ENCODE measurements at regions of chr5 and their contacts with region 1.

Region 1: GRCh38 chr5:36728697-36729543 is 122.5 kb downstream of the SLC1A3 start:
- DNase-seq: peak in 4 of 35 experiments; percentile 9 to 75 (median 21)
- ATAC-seq: peak; percentile 44 to 61 (median 60)
- H3K4me3 ChIP-seq: no peak overlapping the region
- H3K4me3 Mint-ChIP-seq: no peak overlapping the region
- H3K27ac ChIP-seq: no peak overlapping the region
- H3K27ac Mint-ChIP-seq: no peak overlapping the region
- H3K4me1 ChIP-seq: peaks cover 3 to 9% of the 10 kb centered on the region in 2 experiments
- H3K4me1 Mint-ChIP-seq: peaks cover 16 to 19% (median 17%) of the 10 kb centered on the region in 3 donors
- H3K27me3 ChIP-seq: no peaks in the 10 kb centered on the region
- H3K27me3 Mint-ChIP-seq: peaks cover 3 to 7% of the 10 kb centered on the region in 2 donors

Region 2: DNA sequence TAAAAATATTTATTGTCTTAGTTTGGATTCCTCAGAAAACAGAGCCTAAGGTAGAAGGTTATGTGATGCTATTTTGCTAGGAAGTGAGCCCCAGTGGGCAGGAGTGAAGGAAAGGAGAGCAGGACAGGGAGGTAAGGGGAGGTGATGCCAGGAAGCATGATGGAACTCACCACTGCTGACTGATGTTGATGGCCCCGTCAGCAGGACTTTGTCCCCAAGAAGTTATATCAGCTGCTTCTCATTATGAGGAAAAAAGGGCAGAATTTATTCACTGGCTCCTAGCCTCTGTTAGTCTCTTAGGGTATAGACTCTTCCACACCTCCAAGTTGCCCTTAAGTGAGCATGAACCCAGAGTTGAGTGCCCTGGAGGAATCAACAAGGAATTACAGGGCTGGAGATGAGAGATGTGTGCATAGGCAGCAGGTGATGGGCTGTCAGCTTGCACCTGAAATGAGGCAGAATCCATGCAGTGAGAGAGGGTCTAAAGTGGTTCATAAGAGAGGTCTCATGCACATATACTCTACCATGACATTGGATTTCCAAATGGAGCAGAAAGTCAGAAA is 27.1 kb after region 1 on chr5:
- CTCF ChIA-PET with region 1: interaction called in 1 of 2 experiments, 13 read pairs
- POLR2A ChIA-PET with region 1: no interaction called
- DNase-seq: no peak
- ATAC-seq: no peak
- H3K4me3 ChIP-seq: no peak overlapping the region
- H3K4me3 Mint-ChIP-seq: no peak overlapping the region
- H3K27ac ChIP-seq: no peak overlapping the region
- H3K27ac Mint-ChIP-seq: no peak overlapping the region
- H3K4me1 ChIP-seq: no peaks in the 10 kb centered on the region
- H3K4me1 Mint-ChIP-seq: no peaks in the 10 kb centered on the region
- H3K27me3 ChIP-seq: peaks cover 0 to 3% of the 10 kb centered on the region in 2 experiments
- H3K27me3 Mint-ChIP-seq: peaks cover 9 to 10% of the 10 kb centered on the region in 2 donors

Region 3: DNA sequence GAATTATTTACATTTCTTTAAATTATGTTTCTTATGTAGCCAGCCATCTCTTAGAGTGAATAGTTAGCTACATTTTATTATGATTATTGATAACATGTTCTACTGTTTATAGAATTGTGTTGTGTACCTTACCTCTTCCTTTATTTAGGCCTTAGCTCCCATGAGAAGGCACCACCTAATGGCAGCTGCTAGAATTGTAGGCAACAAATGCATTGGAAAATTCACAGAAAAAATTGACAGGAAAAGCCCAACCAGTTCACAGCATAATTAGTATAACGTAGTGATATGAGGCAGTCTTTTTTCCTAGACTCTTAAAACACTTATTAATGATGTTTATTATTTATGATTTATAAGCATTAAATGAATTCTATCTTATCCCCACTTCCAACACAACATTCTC is 826.0 kb after region 1 on chr5:
- CTCF ChIA-PET with region 1: no interaction called
- POLR2A ChIA-PET with region 1: no interaction called
- DNase-seq: no peak
- ATAC-seq: no peak
- H3K4me3 ChIP-seq: no peak overlapping the region
- H3K4me3 Mint-ChIP-seq: no peak overlapping the region
- H3K27ac ChIP-seq: no peak overlapping the region
- H3K27ac Mint-ChIP-seq: no peak overlapping the region
- H3K4me1 ChIP-seq: no peaks in the 10 kb centered on the region
- H3K4me1 Mint-ChIP-seq: peaks cover 12 to 20% (median 19%) of the 10 kb centered on the region in 3 donors
- H3K27me3 ChIP-seq: no peaks in the 10 kb centered on the region
- H3K27me3 Mint-ChIP-seq: no peaks in the 10 kb centered on the region

Measured in T-cell (primary cell).